Activated CD4-positive, alpha-beta T cell treated with anti-CD3 and anti-CD28 coated beads for 36 hours (primary cell): ENCODE measurements at regions of chr1 and their contacts with region 1.

Region 1: GRCh38 chr1:33367485-33368405 is 46.8 kb upstream of the A3GALT2 start:
- DNase-seq: peak; percentile 93
- ATAC-seq: peak; percentile 96
- H3K4me3 Mint-ChIP-seq: no peak overlapping the region
- H3K27ac Mint-ChIP-seq: no peak overlapping the region
- H3K4me1 Mint-ChIP-seq: peaks cover 2% of the 10 kb centered on the region
- H3K27me3 Mint-ChIP-seq: no peaks in the 10 kb centered on the region

Region 2: DNA sequence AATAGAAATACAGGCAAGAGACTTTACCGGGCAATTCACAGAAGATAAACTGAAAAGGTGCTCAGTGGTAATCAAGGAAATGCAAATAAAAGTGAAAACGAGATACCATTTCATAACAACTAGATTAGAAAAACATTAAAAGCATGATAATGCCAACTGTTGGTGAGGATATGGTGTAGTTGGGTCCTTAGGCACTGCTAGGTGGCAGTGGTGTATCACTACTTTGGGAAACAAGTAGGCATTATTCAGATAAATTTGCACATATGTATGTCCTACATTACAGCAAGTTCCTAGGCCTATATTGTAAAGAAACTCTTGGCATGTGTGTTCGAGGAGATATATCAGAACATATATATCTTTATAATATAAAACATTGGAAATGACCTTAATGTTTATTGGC is 255.8 kb before region 1 on chr1:
- CTCF ChIA-PET with region 1: no interaction called
- POLR2A ChIA-PET with region 1: no interaction called
- intact Hi-C with region 1: loop called in 1 of 2 experiments (anchors 1 kb)
- DNase-seq: no peak
- ATAC-seq: peak; percentile 70
- H3K4me3 Mint-ChIP-seq: no peak overlapping the region
- H3K27ac Mint-ChIP-seq: no peak overlapping the region
- H3K4me1 Mint-ChIP-seq: no peaks in the 10 kb centered on the region
- H3K27me3 Mint-ChIP-seq: no peaks in the 10 kb centered on the region

Region 3: DNA sequence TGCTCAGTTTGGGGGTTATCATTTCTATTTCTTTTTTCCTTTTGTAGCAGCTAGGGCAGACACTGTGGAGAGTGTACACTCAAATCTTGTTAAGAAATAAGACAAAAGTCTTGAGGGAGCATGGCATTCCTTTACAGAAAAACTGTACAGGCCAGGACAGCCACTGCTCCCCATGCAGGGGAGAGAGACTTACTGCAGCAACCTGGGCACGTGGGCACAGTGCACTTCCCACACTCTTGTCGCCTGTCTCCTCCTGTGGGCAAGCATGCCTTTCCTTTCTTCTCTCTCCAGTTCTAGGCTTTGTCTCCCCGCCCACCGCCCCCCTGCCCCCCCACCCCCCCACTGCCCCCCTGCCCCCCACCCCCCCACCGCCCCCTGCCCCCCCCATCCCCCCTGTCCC is 11.2 kb after region 1 on chr1:
- CTCF ChIA-PET with region 1: no interaction called
- POLR2A ChIA-PET with region 1: no interaction called
- intact Hi-C with region 1: no loop called
- DNase-seq: no peak
- ATAC-seq: no peak
- H3K4me3 Mint-ChIP-seq: no peak overlapping the region
- H3K27ac Mint-ChIP-seq: no peak overlapping the region
- H3K4me1 Mint-ChIP-seq: peaks cover 16% of the 10 kb centered on the region
- H3K27me3 Mint-ChIP-seq: peaks cover 14% of the 10 kb centered on the region

Region 4: GRCh38 chr1:33455539-33456501 is 88.1 kb after region 1 on chr1:
- CTCF ChIA-PET with region 1: no interaction called
- POLR2A ChIA-PET with region 1: no interaction called
- intact Hi-C with region 1: loop called in 1 of 2 experiments (anchors 5 kb)
- DNase-seq: peak; percentile 62
- ATAC-seq: peak; percentile 87
- H3K4me3 Mint-ChIP-seq: no peak overlapping the region
- H3K27ac Mint-ChIP-seq: no peak overlapping the region
- H3K4me1 Mint-ChIP-seq: peaks cover 3% of the 10 kb centered on the region
- H3K27me3 Mint-ChIP-seq: peaks cover 6% of the 10 kb centered on the region

Region 5: DNA sequence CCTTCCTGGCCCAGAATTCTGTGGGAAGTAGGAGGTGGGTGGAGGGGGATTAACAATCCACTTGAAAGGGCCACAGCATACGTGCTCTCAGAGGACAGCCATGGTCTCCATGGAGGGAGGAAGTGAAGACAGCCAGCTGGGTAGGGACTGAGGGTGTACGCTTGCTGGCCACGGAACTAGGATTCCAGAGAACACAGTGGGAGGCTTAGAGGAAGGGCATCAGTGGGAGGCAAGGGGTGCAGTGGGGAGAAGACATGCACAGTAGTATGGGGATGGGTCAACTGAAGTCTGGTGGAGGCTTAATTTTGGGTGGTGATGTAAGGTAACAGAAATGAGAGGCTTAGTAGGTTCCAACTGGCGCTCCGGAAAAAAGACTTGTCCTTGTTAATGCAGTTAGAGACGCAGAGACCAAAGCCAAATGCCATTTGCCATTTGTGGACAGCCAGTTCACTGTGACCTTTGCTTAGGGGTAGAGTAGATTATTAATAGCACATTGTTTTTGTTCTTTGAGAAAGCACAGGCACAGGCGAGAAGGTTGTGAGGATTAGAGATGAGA is 207.7 kb after region 1 on chr1:
- CTCF ChIA-PET with region 1: no interaction called
- POLR2A ChIA-PET with region 1: no interaction called
- intact Hi-C with region 1: no loop called
- DNase-seq: no peak
- ATAC-seq: no peak
- H3K4me3 Mint-ChIP-seq: no peak overlapping the region
- H3K27ac Mint-ChIP-seq: no peak overlapping the region
- H3K4me1 Mint-ChIP-seq: no peaks in the 10 kb centered on the region
- H3K27me3 Mint-ChIP-seq: peaks cover 32% of the 10 kb centered on the region

Region 6: DNA sequence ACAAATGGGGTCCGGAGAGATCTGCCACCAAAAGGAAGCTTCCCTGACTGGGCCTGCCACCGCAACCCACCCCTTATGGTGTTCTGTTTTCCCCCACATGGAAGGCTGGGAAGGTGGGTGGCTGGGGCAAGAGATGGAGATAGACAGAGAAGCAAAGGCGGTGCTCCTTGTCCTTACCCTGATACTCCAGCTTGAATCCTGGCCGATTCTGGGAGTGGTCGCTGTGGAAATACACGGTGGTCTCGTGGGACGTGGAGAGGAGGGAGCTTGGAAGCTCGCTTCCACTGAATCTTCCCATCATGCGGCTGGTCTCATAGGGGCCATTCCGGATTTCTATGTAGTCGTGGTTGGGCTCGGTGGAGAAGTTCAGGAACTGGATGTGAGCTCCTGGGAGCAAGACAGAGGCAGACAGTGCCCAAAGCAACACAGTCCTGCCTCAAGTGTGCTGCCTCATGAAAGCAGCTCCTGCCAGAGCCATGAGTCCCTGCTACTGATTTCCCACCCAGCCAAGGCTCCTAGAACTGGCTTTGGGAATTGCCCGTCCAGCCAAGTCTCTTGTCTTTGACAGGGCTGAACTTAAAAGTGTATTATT is 243.2 kb after region 1 on chr1:
- CTCF ChIA-PET with region 1: no interaction called
- POLR2A ChIA-PET with region 1: no interaction called
- intact Hi-C with region 1: loop called in 1 of 2 experiments (anchors 5 kb)
- DNase-seq: no peak
- ATAC-seq: no peak
- H3K4me3 Mint-ChIP-seq: no peak overlapping the region
- H3K27ac Mint-ChIP-seq: no peak overlapping the region
- H3K4me1 Mint-ChIP-seq: peaks cover 3% of the 10 kb centered on the region
- H3K27me3 Mint-ChIP-seq: peaks cover 19% of the 10 kb centered on the region